ENCODE measurements at regions of chr20 and their contacts with region 1.

Region 1: DNA sequence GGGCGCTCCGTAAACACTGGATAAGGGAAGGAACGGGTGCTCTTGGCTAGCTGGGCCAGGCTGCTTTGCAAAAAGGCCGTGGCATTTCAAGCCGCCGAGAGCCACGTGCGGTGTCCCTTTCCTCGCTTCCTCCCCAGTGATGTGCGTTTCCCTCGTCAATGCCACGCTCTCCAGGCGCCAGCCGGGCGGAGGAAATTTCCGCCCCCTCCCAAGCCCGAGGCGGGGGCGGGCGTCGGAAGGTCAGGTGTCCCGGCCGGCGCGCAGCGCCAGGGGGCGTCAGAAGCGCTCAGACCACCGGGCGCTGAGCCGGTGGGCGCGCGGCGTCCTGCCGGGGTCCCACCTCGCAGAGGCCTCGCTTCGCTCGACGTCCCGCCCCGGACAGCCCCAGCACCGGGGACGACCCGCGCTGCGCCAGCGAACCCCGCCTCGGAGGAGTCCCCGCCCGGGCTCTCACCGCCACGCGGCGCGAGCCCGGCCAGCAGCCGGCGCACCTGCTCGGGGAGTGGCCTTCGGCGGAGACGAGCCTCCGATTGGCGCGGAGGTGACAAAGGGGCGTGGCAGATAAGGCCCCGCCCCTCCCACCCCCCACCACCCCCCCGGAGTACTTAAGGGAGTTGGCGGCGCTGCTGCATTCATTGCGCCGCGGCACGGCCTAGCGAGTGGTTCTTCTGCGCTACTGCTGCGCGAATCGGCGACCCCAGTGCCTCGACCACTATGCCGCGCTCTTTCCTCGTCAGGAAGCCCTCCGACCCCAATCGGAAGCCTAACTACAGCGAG is at the start of gene SNAI1:
- DNase-seq: peak; percentile 98
- H3K4me3 ChIP-seq: peak within 1 kb of the TSS; percentile 76 to 80
- H3K27ac ChIP-seq: peak within 1 kb of the TSS; percentile 43 to 76; a peak in 3 of 4 replicates
- H3K4me1 ChIP-seq: peaks cover 11 to 40% of the 10 kb centered on the region in 2 experiments; a peak in 3 of 4 replicates
- H3K27me3 ChIP-seq: no peaks in the 10 kb centered on the region
- CTCF ChIP-seq: peak; percentile 61
- EP300 ChIP-seq: no peak
- RAD21 ChIP-seq: peak; percentile 46
- polyA plus RNA-seq, gene SNAI1: 3.7 and 6.2 TPM in 2 replicates

Region 2: GRCh38 chr20:49956686-49957085 is 25.8 kb before region 1 on chr20:
- CTCF ChIA-PET with region 1: interaction called, 15 read pairs
- POLR2A ChIA-PET with region 1: interaction called, 6 read pairs
- DNase-seq: no peak
- H3K4me3 ChIP-seq: no peak overlapping the region
- H3K27ac ChIP-seq: no peak overlapping the region
- H3K4me1 ChIP-seq: no peaks in the 10 kb centered on the region; a peak in 1 of 4 replicates
- H3K27me3 ChIP-seq: no peaks in the 10 kb centered on the region
- CTCF ChIP-seq: no peak
- EP300 ChIP-seq: no peak
- RAD21 ChIP-seq: no peak

Region 3: DNA sequence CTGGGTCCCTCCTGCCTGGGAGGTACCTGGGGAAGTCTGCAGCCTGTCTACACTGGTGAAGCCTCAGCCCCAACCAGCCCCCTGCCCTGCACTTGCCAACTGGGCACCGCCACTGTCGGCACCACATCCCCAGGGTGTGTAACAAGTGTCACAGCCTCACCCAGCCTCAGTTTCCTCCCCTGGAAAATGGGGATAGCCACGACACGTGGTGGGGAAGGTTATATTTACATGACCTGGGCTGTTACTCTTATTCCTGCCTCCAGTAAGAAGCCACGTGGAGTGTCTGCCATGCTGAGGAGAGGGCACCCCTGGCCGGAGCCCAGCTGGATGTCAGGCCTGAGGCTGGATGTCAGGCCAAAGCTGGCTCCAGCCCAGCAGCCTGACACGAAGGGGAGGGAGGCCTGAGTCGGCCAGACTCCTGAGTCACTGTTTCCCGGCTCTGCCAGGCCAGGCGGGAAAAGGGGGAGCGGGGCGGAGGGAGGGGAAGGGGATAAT is 45.1 kb after region 1 on chr20:
- CTCF ChIA-PET with region 1: interaction called, 15 read pairs
- POLR2A ChIA-PET with region 1: interaction called, 6 read pairs
- DNase-seq: peak; percentile 92
- H3K4me3 ChIP-seq: no peak overlapping the region
- H3K27ac ChIP-seq: peak overlapping the region; percentile 50 to 66
- H3K4me1 ChIP-seq: peaks cover 21 to 41% of the 10 kb centered on the region in 2 experiments; a peak in 2 of 4 replicates
- H3K27me3 ChIP-seq: no peaks in the 10 kb centered on the region
- CTCF ChIP-seq: no peak
- EP300 ChIP-seq: peak; percentile 78 to 83; a peak in 3 of 4 replicates
- RAD21 ChIP-seq: peak; percentile 25; the same call in 1 of the 2 replicates

Region 4: GRCh38 chr20:50070991-50071888 is 88.7 kb after region 1 on chr20:
- CTCF ChIA-PET with region 1: interaction called, 807 read pairs
- POLR2A ChIA-PET with region 1: interaction called, 27 read pairs
- DNase-seq: peak; percentile 96
- H3K4me3 ChIP-seq: peak overlapping the region; percentile 37 to 70
- H3K27ac ChIP-seq: 0 out of 4 replicates have a peak overlapping the region, but pooled peaks of 1 of the 2 experiments have one; percentile 3
- H3K4me1 ChIP-seq: peaks cover 0 to 5% of the 10 kb centered on the region in 2 experiments; a peak in 1 of 4 replicates
- H3K27me3 ChIP-seq: no peaks in the 10 kb centered on the region
- CTCF ChIP-seq: peak; percentile 99
- EP300 ChIP-seq: no peak
- RAD21 ChIP-seq: peak; percentile 99

Region 5: GRCh38 chr20:50115591-50116372 is 133.2 kb after region 1 on chr20:
- CTCF ChIA-PET with region 1: interaction called, 44 read pairs
- POLR2A ChIA-PET with region 1: no interaction called
- DNase-seq: peak; percentile 89
- H3K4me3 ChIP-seq: peak overlapping the region; percentile 64 to 70
- H3K27ac ChIP-seq: peak overlapping the region; percentile 52 to 85; a peak in 3 of 4 replicates
- H3K4me1 ChIP-seq: peaks cover 15 to 37% of the 10 kb centered on the region in 2 experiments; a peak in 3 of 4 replicates
- H3K27me3 ChIP-seq: no peaks in the 10 kb centered on the region
- CTCF ChIP-seq: no peak
- EP300 ChIP-seq: no peak
- RAD21 ChIP-seq: no peak

Region 6: GRCh38 chr20:50179507-50180016 is 197.0 kb after region 1 on chr20:
- CTCF ChIA-PET with region 1: interaction called, 42 read pairs
- POLR2A ChIA-PET with region 1: interaction called, 3 read pairs
- DNase-seq: no peak
- H3K4me3 ChIP-seq: no peak overlapping the region
- H3K27ac ChIP-seq: no peak overlapping the region
- H3K4me1 ChIP-seq: peaks cover 0 to 2% of the 10 kb centered on the region in 2 experiments; a peak in 1 of 4 replicates
- H3K27me3 ChIP-seq: no peaks in the 10 kb centered on the region
- CTCF ChIP-seq: no peak
- EP300 ChIP-seq: no peak
- RAD21 ChIP-seq: no peak

Measured in SK-N-SH (cell line).